ENCODE measurements at regions of chr10 and their contacts with region 1.

Region 1: GRCh38 chr10:9209105-9209798 is 1154.8 kb downstream of the GATA3 start:
- DNase-seq: peak; percentile 32 to 75 (median 58)
- ATAC-seq: peak; percentile 68
- H3K4me3 ChIP-seq: no peak overlapping the region
- H3K4me3 Mint-ChIP-seq: no peak overlapping the region
- H3K27ac ChIP-seq: no peak overlapping the region
- H3K27ac Mint-ChIP-seq: no peak overlapping the region
- H3K4me1 ChIP-seq: no peaks in the 10 kb centered on the region
- H3K4me1 Mint-ChIP-seq: peaks cover 2 to 8% (median 6%) of the 10 kb centered on the region in 7 donors
- H3K27me3 ChIP-seq: no peaks in the 10 kb centered on the region
- H3K27me3 Mint-ChIP-seq: peaks cover 4 to 13% (median 6%) of the 10 kb centered on the region in 5 donors

Region 2: DNA sequence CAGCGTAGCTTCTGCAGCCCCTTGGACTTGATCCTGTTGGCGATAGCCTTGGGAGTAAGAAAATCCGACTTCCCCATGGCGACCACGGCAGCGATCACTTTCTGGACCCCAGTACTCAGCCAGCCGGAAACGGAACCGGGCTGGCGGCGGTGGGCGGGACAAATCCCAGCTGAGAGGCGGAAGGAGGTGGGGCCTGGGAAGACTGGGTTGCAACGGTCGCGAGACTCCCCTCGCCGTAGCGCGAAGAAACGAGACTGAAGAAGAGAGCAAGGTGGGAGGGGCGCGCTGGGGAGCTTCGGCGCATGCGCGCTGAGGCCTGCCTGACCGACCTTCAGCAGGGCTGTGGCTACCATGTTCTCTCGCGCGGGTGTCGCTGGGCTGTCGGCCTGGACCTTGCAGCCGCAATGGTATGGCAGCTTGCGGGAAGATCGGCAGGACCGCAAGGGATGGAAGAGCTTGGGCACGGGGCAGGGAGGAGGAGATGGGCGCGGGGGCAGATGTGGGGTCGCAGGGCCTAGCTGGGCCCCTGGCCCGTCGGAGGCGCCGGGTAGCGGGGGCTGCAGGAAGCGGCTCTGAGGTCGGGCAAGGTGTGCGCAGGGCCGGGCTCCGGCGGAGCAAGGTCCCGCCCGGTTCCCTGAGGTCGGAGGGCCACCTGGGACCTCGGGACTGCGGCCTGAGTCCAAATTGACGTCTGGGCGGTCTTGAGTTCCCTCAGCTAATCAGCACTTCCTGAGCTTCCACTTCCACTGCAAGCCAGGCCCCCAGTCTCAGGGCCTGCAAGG is 1421.2 kb before region 1 on chr10 and contains the starts of genes ATP5F1C and KIN:
- CTCF ChIA-PET with region 1: no interaction called
- POLR2A ChIA-PET with region 1: no interaction called
- intact Hi-C with region 1: no loop called
- DNase-seq: peak; percentile 93 to 98 (median 96)
- ATAC-seq: peak; percentile 98
- H3K4me3 ChIP-seq: peak within 1 kb of the TSS; percentile 79
- H3K4me3 Mint-ChIP-seq: no peak within 1 kb of the TSS
- H3K27ac ChIP-seq: peak within 1 kb of the TSS; percentile 84
- H3K27ac Mint-ChIP-seq: peak within 1 kb of the TSS in 1 of 9 donors; percentile 90
- H3K4me1 ChIP-seq: peaks cover 21 to 28% of the 10 kb centered on the region in 2 donors
- H3K4me1 Mint-ChIP-seq: peaks cover 47 to 77% (median 57%) of the 10 kb centered on the region in 7 donors
- H3K27me3 ChIP-seq: no peaks in the 10 kb centered on the region
- H3K27me3 Mint-ChIP-seq: no peaks in the 10 kb centered on the region
- total RNA-seq, gene ATP5F1C: 113 to 290 (median 122) TPM
- total RNA-seq, gene KIN: 7.2 to 18.4 (median 14.3) TPM

Region 3: GRCh38 chr10:7872041-7872442 is 1337.2 kb before region 1 on chr10:
- CTCF ChIA-PET with region 1: interaction called, 7 read pairs
- POLR2A ChIA-PET with region 1: no interaction called
- intact Hi-C with region 1: loop called (anchors 1 kb)
- DNase-seq: peak in 6 of 9 donors; percentile 9 to 51 (median 44)
- ATAC-seq: peak; percentile 54
- H3K4me3 ChIP-seq: no peak overlapping the region
- H3K4me3 Mint-ChIP-seq: peak overlapping the region; percentile 8 to 84 (median 74)
- H3K27ac ChIP-seq: no peak overlapping the region
- H3K27ac Mint-ChIP-seq: peak overlapping the region in 3 of 9 donors; percentile 16 to 48 (median 41)
- H3K4me1 ChIP-seq: peaks cover 0 to 3% of the 10 kb centered on the region in 2 donors
- H3K4me1 Mint-ChIP-seq: peaks cover 6 to 61% (median 31%) of the 10 kb centered on the region in 7 donors
- H3K27me3 ChIP-seq: no peaks in the 10 kb centered on the region
- H3K27me3 Mint-ChIP-seq: no peaks in the 10 kb centered on the region

Region 4: DNA sequence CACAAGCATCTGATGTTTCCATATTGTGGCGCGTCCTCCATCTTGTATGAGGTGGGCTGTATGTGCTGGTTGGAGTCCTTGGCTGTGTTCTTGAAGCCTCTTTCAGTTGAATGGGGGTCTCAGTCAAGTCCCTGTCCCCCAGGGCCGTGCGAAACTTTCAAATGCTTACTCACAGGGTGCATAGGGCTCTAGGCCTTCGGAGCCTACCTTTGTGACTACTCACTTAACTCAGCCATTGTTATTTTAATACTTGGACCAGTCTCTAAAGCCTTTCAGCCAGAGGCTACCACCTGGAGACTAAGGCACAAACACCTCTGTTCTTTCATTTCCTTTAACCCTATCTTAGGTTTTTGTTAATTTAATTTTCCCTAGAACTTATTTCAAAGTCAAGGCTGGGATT is 368.9 kb before region 1 on chr10:
- CTCF ChIA-PET with region 1: no interaction called
- POLR2A ChIA-PET with region 1: no interaction called
- intact Hi-C with region 1: loop called in 1 of 2 experiments (anchors 10 kb)
- DNase-seq: no peak
- ATAC-seq: no peak
- H3K4me3 ChIP-seq: no peak overlapping the region
- H3K4me3 Mint-ChIP-seq: no peak overlapping the region
- H3K27ac ChIP-seq: no peak overlapping the region
- H3K27ac Mint-ChIP-seq: no peak overlapping the region
- H3K4me1 ChIP-seq: no peaks in the 10 kb centered on the region
- H3K4me1 Mint-ChIP-seq: no peaks in the 10 kb centered on the region
- H3K27me3 ChIP-seq: no peaks in the 10 kb centered on the region
- H3K27me3 Mint-ChIP-seq: peaks cover 0 to 13% (median 5%) of the 10 kb centered on the region in 5 donors

Region 5: DNA sequence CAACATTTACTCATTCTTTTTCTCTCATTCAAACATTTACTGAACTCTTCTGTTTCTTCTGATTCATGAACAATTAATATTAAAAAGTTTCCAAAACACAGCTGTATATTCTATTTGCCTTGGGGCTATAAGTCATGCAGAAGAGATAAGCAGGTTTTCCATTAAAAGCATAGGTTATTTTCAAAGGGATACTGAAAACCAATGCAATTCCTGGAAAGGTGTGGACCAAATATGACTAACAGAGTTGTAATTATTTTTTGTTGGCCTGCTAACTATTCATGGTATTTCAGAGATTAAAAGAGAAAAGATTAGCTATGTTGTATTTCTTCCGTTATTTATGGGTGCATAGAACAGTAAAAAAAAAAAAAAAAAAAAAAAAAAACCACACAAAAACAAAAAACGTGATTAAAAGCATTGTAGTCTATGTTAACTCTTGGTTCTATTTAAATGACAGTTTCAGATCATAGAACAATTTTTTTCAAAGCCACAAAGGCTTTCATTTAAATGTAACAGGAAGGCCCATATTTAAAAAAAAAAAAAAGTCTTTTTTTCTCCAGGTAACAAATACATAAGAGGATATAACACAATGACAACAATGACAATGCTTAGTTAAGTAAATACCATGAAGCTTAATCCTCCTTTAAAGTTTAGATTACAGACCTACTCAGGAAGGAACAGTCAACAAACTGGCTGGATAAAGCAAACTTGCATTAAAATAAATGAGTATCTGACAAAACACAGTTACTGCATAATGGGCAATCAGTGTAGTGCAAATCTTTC is 111.9 kb before region 1 on chr10:
- CTCF ChIA-PET with region 1: no interaction called
- POLR2A ChIA-PET with region 1: no interaction called
- intact Hi-C with region 1: loop called in 1 of 2 experiments (anchors 2 kb)
- DNase-seq: peak in 7 of 9 donors; percentile 29 to 89 (median 81)
- ATAC-seq: peak; percentile 81
- H3K4me3 ChIP-seq: no peak overlapping the region
- H3K4me3 Mint-ChIP-seq: peak overlapping the region in 7 of 10 donors; percentile 30 to 82 (median 67)
- H3K27ac ChIP-seq: no peak overlapping the region
- H3K27ac Mint-ChIP-seq: peak overlapping the region in 8 of 9 donors; percentile 64 to 97 (median 90)
- H3K4me1 ChIP-seq: peaks cover 0 to 26% of the 10 kb centered on the region in 2 donors
- H3K4me1 Mint-ChIP-seq: peaks cover 10 to 47% (median 43%) of the 10 kb centered on the region in 7 donors
- H3K27me3 ChIP-seq: no peaks in the 10 kb centered on the region
- H3K27me3 Mint-ChIP-seq: peaks cover 0 to 2% (median 0%) of the 10 kb centered on the region in 5 donors

Region 6: GRCh38 chr10:9166770-9167169 is 42.5 kb before region 1 on chr10:
- CTCF ChIA-PET with region 1: no interaction called
- POLR2A ChIA-PET with region 1: no interaction called
- intact Hi-C with region 1: no loop called
- DNase-seq: no peak
- ATAC-seq: no peak
- H3K4me3 ChIP-seq: no peak overlapping the region
- H3K4me3 Mint-ChIP-seq: peak overlapping the region in 1 of 10 donors; percentile 0
- H3K27ac ChIP-seq: no peak overlapping the region
- H3K27ac Mint-ChIP-seq: peak overlapping the region in 1 of 9 donors; percentile 2
- H3K4me1 ChIP-seq: no peaks in the 10 kb centered on the region
- H3K4me1 Mint-ChIP-seq: peaks cover 10 to 35% (median 31%) of the 10 kb centered on the region in 7 donors
- H3K27me3 ChIP-seq: no peaks in the 10 kb centered on the region
- H3K27me3 Mint-ChIP-seq: no peaks in the 10 kb centered on the region

Region 7: GRCh38 chr10:9331583-9332008 is 122.3 kb after region 1 on chr10:
- CTCF ChIA-PET with region 1: no interaction called
- POLR2A ChIA-PET with region 1: no interaction called
- intact Hi-C with region 1: no loop called
- DNase-seq: peak in 7 of 9 donors; percentile 17 to 60 (median 43)
- ATAC-seq: peak; percentile 75
- H3K4me3 ChIP-seq: no peak overlapping the region
- H3K4me3 Mint-ChIP-seq: no peak overlapping the region
- H3K27ac ChIP-seq: no peak overlapping the region
- H3K27ac Mint-ChIP-seq: no peak overlapping the region
- H3K4me1 ChIP-seq: no peaks in the 10 kb centered on the region
- H3K4me1 Mint-ChIP-seq: no peaks in the 10 kb centered on the region
- H3K27me3 ChIP-seq: no peaks in the 10 kb centered on the region
- H3K27me3 Mint-ChIP-seq: peaks cover 10 to 35% (median 21%) of the 10 kb centered on the region in 5 donors

Measured in naive thymus-derived CD4-positive, alpha-beta T cell (primary cell).